Natural killer cell (primary cell): ENCODE measurements at regions of chrX and their contacts with region 1.

Region 1: DNA sequence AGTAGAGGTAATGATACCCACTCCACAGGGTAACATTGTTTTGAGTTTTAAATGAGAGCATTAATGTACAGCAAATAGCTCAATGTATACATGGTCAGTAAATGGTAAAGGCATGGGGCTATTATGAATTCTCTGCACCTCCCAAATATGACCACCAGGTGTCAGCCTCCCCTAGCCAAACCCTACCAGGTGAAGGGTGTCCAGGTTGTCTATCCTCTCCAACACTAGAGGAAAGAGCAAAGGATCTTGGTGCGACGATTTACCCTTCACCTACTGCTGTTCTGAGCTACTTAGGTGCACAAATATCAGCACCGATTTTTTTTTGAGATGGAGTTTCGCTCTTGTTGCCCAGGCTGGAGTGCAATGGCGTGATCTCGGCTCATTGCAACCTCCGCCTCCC is 26.5 kb upstream of the XIAP start:
- DNase-seq: peak; percentile 33 to 77
- ATAC-seq: peak; percentile 83 to 95 (median 92)
- H3K4me3 ChIP-seq: no peak overlapping the region
- H3K4me3 Mint-ChIP-seq: no peak overlapping the region
- H3K27ac ChIP-seq: no peak overlapping the region
- H3K27ac Mint-ChIP-seq: no peak overlapping the region
- H3K4me1 ChIP-seq: no peaks in the 10 kb centered on the region
- H3K4me1 Mint-ChIP-seq: no peaks in the 10 kb centered on the region
- H3K27me3 ChIP-seq: no peaks in the 10 kb centered on the region
- H3K27me3 Mint-ChIP-seq: peaks cover 0 to 4% of the 10 kb centered on the region in 2 donors
- CTCF ChIP-seq: peak; percentile 70

Region 2: GRCh38 chrX:123884809-123885408 is 51.5 kb after region 1 on chrX:
- intact Hi-C with region 1: loop called (anchors 2 kb)
- DNase-seq: peak in 1 of 2 donors; percentile 72
- ATAC-seq: peak; percentile 62 to 71 (median 63)
- H3K4me3 ChIP-seq: no peak overlapping the region
- H3K4me3 Mint-ChIP-seq: no peak overlapping the region
- H3K27ac ChIP-seq: no peak overlapping the region
- H3K27ac Mint-ChIP-seq: no peak overlapping the region
- H3K4me1 ChIP-seq: peaks cover under 1% of the 10 kb centered on the region
- H3K4me1 Mint-ChIP-seq: peaks cover 7 to 8% of the 10 kb centered on the region in 2 donors
- H3K27me3 ChIP-seq: no peaks in the 10 kb centered on the region
- H3K27me3 Mint-ChIP-seq: no peaks in the 10 kb centered on the region
- CTCF ChIP-seq: peak; percentile 56